PC-3 (cell line): ENCODE measurements at regions of chr2 and their contacts with region 1.

Region 1: GRCh38 chr2:71716781-71717624 is 263.6 kb downstream of the DYSF start:
- DNase-seq: peak; percentile 93
- ATAC-seq: peak; percentile 95
- H3K4me3 ChIP-seq: no peak overlapping the region
- H3K27ac ChIP-seq: 0 out of 2 replicates have a peak overlapping the region, but pooled peaks have one; percentile 12
- H3K4me1 ChIP-seq: peaks cover 20% of the 10 kb centered on the region
- H3K27me3 ChIP-seq: no peaks in the 10 kb centered on the region
- CTCF ChIP-seq: no peak

Region 2: GRCh38 chr2:71646028-71646427 is 71.0 kb before region 1 on chr2:
- CTCF ChIA-PET with region 1: no interaction called
- POLR2A ChIA-PET with region 1: no interaction called
- intact Hi-C with region 1: no loop called
- DNase-seq: peak; percentile 89
- ATAC-seq: peak; percentile 99
- H3K4me3 ChIP-seq: no peak overlapping the region
- H3K27ac ChIP-seq: no peak overlapping the region
- H3K4me1 ChIP-seq: peaks cover 27% of the 10 kb centered on the region
- H3K27me3 ChIP-seq: no peaks in the 10 kb centered on the region
- CTCF ChIP-seq: no peak

Region 3: GRCh38 chr2:71742953-71743601 is 26.1 kb after region 1 on chr2:
- CTCF ChIA-PET with region 1: no interaction called
- POLR2A ChIA-PET with region 1: no interaction called
- intact Hi-C with region 1: loop called (anchors 2 kb)
- DNase-seq: peak; percentile 96
- ATAC-seq: peak; percentile 74
- H3K4me3 ChIP-seq: no peak overlapping the region
- H3K27ac ChIP-seq: peak overlapping the region; percentile 20; the same call in 1 of the 2 replicates
- H3K4me1 ChIP-seq: peaks cover 50% of the 10 kb centered on the region
- H3K27me3 ChIP-seq: no peaks in the 10 kb centered on the region
- CTCF ChIP-seq: no peak